Ascending aorta (tissue), 2 donors: ENCODE measurements at regions of chr7 and their contacts with region 1.

Region 1: GRCh38 chr7:112939574-112940314 is 146.9 kb downstream of the GPR85 start:
- DNase-seq: peak; percentile 98 to 100
- H3K4me3 ChIP-seq: peak overlapping the region; percentile 75 to 86
- H3K27ac ChIP-seq: peak overlapping the region; percentile 65 to 74
- H3K4me1 ChIP-seq: peaks cover 0 to 3% of the 10 kb centered on the region in 2 donors
- H3K27me3 ChIP-seq: no peaks in the 10 kb centered on the region
- CTCF ChIP-seq: no peak

Region 2: DNA sequence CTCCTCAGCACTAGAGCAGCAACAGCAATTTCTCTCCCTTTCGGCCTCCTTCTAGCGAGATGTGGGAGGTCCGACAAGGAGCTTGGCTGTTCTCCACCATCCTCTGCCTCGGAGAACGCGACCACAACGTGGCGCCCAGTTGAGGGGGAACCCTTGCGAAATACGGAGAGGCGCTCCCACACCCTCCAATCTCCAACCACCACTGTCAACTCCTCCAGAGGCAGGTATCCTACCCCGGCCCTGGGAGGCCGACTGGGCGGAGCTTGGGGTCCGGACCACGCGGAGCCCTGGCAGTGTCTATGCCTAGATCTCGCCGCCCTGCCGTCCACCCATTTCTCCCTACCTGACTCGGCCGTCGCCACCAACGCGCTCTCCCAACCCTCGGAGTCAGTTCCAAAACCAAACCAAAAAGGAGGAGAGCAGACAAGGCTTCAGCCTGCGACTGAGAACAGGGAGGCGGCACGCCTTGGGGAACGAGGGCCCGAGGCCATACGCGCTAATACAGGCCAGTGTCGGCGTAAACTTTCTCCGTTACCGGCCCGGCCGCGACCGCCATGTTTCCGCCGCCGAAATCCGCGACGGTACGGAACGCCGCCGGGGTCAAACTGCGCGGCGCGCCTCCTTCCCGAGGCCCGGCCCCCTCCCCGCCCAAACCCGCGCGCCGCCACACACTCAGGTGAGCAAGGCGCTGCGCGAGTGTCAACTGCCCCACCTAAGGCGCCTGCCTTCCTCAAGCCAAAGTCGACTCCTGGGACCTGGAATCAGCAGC is 149.7 kb before region 1 on chr7 and contains the start of gene TMEM168:
- intact Hi-C with region 1: loop called (anchors 2 kb)
- DNase-seq: peak in 1 of 2 donors; percentile 87
- H3K4me3 ChIP-seq: peak within 1 kb of the TSS; percentile 90 to 99
- H3K27ac ChIP-seq: peak within 1 kb of the TSS; percentile 92 to 93
- H3K4me1 ChIP-seq: peaks cover 0 to 6% of the 10 kb centered on the region in 2 donors
- H3K27me3 ChIP-seq: no peaks in the 10 kb centered on the region
- CTCF ChIP-seq: peak in 1 of 3 experiments; percentile 3
- total RNA-seq, gene TMEM168: 8.4 TPM